ENCODE measurements at regions of chr1 and their contacts with region 1.

Region 1: GRCh38 chr1:171715813-171716251 is 26.0 kb downstream of the VAMP4 start:
- DNase-seq: no peak
- ATAC-seq: no peak
- H3K4me3 ChIP-seq: no peak overlapping the region
- H3K4me3 Mint-ChIP-seq: no peak overlapping the region
- H3K27ac ChIP-seq: no peak overlapping the region
- H3K27ac Mint-ChIP-seq: no peak overlapping the region
- H3K4me1 ChIP-seq: no peaks in the 10 kb centered on the region
- H3K4me1 Mint-ChIP-seq: peaks cover 7 to 21% (median 11%) of the 10 kb centered on the region in 7 donors
- H3K27me3 ChIP-seq: no peaks in the 10 kb centered on the region
- H3K27me3 Mint-ChIP-seq: no peaks in the 10 kb centered on the region

Region 2: GRCh38 chr1:171081314-171081753 is 634.5 kb before region 1 on chr1:
- CTCF ChIA-PET with region 1: no interaction called
- POLR2A ChIA-PET with region 1: no interaction called
- intact Hi-C with region 1: loop called in 1 of 2 experiments (anchors 10 kb)
- DNase-seq: no peak
- ATAC-seq: no peak
- H3K4me3 ChIP-seq: no peak overlapping the region
- H3K4me3 Mint-ChIP-seq: no peak overlapping the region
- H3K27ac ChIP-seq: no peak overlapping the region
- H3K27ac Mint-ChIP-seq: no peak overlapping the region
- H3K4me1 ChIP-seq: no peaks in the 10 kb centered on the region
- H3K4me1 Mint-ChIP-seq: no peaks in the 10 kb centered on the region
- H3K27me3 ChIP-seq: no peaks in the 10 kb centered on the region
- H3K27me3 Mint-ChIP-seq: peaks cover 0 to 28% (median 13%) of the 10 kb centered on the region in 5 donors

Region 3: DNA sequence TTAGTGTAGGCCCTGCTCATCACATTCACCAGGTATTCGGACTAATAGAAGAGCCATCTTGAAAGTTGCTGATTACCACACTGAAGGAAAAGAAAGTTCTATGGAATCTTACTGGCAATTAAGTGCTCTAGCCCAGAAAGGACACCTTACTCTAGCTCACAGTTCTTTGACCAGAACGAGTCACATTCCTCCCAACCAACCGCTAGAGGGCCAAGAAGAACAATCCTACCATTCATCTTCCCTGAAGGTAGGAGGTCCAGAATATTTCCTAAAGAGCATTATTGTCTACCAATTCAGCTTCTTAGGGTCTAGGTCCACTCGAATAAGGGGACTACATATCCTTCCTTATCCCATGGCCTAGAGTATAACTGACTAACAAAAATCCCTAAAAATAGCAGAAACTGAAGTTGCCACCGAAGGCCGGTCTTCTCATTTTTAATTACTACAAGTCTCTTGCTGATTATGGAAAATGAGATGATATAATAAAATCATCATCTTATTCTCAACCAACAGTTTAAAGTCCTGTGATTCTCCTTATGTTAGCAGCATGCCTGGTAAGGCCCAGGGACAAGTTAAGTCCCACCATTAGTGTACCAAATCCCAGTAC is 470.3 kb before region 1 on chr1:
- CTCF ChIA-PET with region 1: no interaction called
- POLR2A ChIA-PET with region 1: no interaction called
- intact Hi-C with region 1: loop called in 1 of 2 experiments (anchors 5 kb)
- DNase-seq: peak in 4 of 9 donors; percentile 8 to 25 (median 15)
- ATAC-seq: peak; percentile 60
- H3K4me3 ChIP-seq: no peak overlapping the region
- H3K4me3 Mint-ChIP-seq: no peak overlapping the region
- H3K27ac ChIP-seq: no peak overlapping the region
- H3K27ac Mint-ChIP-seq: peak overlapping the region in 1 of 9 donors; percentile 28
- H3K4me1 ChIP-seq: no peaks in the 10 kb centered on the region
- H3K4me1 Mint-ChIP-seq: no peaks in the 10 kb centered on the region
- H3K27me3 ChIP-seq: peaks cover 0 to 4% of the 10 kb centered on the region in 2 donors
- H3K27me3 Mint-ChIP-seq: peaks cover 16 to 49% (median 31%) of the 10 kb centered on the region in 5 donors

Region 4: GRCh38 chr1:171654942-171655745 is 60.7 kb before region 1 on chr1:
- CTCF ChIA-PET with region 1: no interaction called
- POLR2A ChIA-PET with region 1: no interaction called
- intact Hi-C with region 1: loop called in 1 of 2 experiments (anchors 5 kb)
- DNase-seq: peak; percentile 24 to 76 (median 38)
- ATAC-seq: peak; percentile 78
- H3K4me3 ChIP-seq: peak overlapping the region; percentile 39
- H3K4me3 Mint-ChIP-seq: peak overlapping the region in 8 of 10 donors; percentile 3 to 72 (median 52)
- H3K27ac ChIP-seq: no peak overlapping the region
- H3K27ac Mint-ChIP-seq: peak overlapping the region in 1 of 9 donors; percentile 33
- H3K4me1 ChIP-seq: peaks cover 3 to 5% of the 10 kb centered on the region in 2 donors
- H3K4me1 Mint-ChIP-seq: peaks cover 9 to 12% (median 10%) of the 10 kb centered on the region in 7 donors
- H3K27me3 ChIP-seq: no peaks in the 10 kb centered on the region
- H3K27me3 Mint-ChIP-seq: peaks cover 0 to 34% (median 11%) of the 10 kb centered on the region in 5 donors

Measured in naive thymus-derived CD4-positive, alpha-beta T cell (primary cell).